A549 (cell line): ENCODE measurements at regions of chr6 and their contacts with region 1.

Region 1: GRCh38 chr6:55276745-55277530 is 50.3 kb upstream of the GFRAL start:
- DNase-seq: peak; percentile 15 to 74
- ATAC-seq: peak in 1 of 2 experiments; percentile 61; a peak in 2 of 6 replicates
- H3K4me3 ChIP-seq: no peak overlapping the region
- H3K27ac ChIP-seq: no peak overlapping the region
- H3K4me1 ChIP-seq: no peaks in the 10 kb centered on the region
- CTCF ChIP-seq: peak; percentile 63
- EP300 ChIP-seq: no peak
- POLR2A ChIP-seq: no peak
- RAD21 ChIP-seq: peak; percentile 68 to 73

Region 2: GRCh38 chr6:55141611-55142010 is 135.3 kb before region 1 on chr6:
- CTCF ChIA-PET with region 1: no interaction called
- POLR2A ChIA-PET with region 1: no interaction called
- DNase-seq: no peak
- ATAC-seq: no peak
- H3K4me3 ChIP-seq: no peak overlapping the region
- H3K27ac ChIP-seq: no peak overlapping the region
- H3K4me1 ChIP-seq: no peaks in the 10 kb centered on the region
- CTCF ChIP-seq: no peak
- EP300 ChIP-seq: no peak
- POLR2A ChIP-seq: no peak
- RAD21 ChIP-seq: no peak

Region 3: GRCh38 chr6:55445648-55446204 is 168.8 kb after region 1 on chr6:
- CTCF ChIA-PET with region 1: interaction called, 12 read pairs
- POLR2A ChIA-PET with region 1: no interaction called
- DNase-seq: peak in 1 of 2 experiments; percentile 31
- ATAC-seq: no peak
- H3K4me3 ChIP-seq: no peak overlapping the region
- H3K27ac ChIP-seq: no peak overlapping the region
- H3K4me1 ChIP-seq: 0 out of 3 replicates have a peak, but pooled peaks cover 3% of the 10 kb centered on the region
- CTCF ChIP-seq: peak; percentile 81
- EP300 ChIP-seq: no peak
- POLR2A ChIP-seq: no peak
- RAD21 ChIP-seq: peak; percentile 84 to 87

Region 4: GRCh38 chr6:55953335-55953734 is 676.4 kb after region 1 on chr6:
- CTCF ChIA-PET with region 1: interaction called, 10 read pairs
- POLR2A ChIA-PET with region 1: no interaction called
- DNase-seq: peak; percentile 10 to 51
- ATAC-seq: peak; percentile 73 to 76; a peak in 5 of 6 replicates
- H3K4me3 ChIP-seq: peak overlapping the region; percentile 41
- H3K27ac ChIP-seq: peak overlapping the region; percentile 51 to 52; a peak in 3 of 6 replicates
- H3K4me1 ChIP-seq: 0 out of 3 replicates have a peak, but pooled peaks cover 2% of the 10 kb centered on the region
- CTCF ChIP-seq: peak; percentile 66
- EP300 ChIP-seq: no peak
- POLR2A ChIP-seq: no peak
- RAD21 ChIP-seq: peak; percentile 76 to 83

Region 5: DNA sequence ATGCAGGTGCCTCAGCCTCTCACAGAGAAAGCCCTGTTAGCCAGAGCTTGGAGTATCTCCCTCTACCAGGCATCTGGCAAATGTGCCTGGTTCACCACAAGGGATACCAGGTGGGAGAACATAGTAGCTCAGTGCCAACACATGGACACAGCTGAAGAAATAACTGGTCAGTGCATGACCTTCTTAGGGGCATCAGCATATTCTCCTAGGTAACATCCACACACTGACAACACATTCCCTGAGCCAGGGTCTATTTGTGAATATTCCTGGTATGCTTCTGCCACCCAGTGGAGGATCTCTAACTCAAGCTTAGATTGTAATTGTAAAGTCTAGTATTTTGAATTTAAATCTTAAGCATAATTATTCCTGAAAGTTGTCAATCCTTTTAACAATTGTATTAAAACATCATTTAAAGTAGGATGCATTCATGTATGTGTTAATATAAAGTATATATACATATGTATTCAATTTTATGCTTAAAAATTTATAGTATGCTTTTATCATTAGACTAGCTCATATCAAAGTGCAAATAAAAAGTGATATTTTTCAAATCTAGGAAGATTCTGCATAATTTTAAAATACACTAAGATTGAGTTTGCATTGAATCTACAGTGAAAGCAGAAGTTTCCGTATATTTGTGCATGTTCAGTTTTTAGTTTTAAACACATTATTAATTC is 1015.7 kb after region 1 on chr6:
- CTCF ChIA-PET with region 1: interaction called, 11 read pairs
- POLR2A ChIA-PET with region 1: no interaction called
- DNase-seq: peak; percentile 39 to 67
- ATAC-seq: peak; percentile 84 to 89
- H3K4me3 ChIP-seq: no peak overlapping the region
- H3K27ac ChIP-seq: peak overlapping the region in 1 of 2 experiments; percentile 53; a peak in 2 of 6 replicates
- H3K4me1 ChIP-seq: peaks cover 8% of the 10 kb centered on the region
- CTCF ChIP-seq: peak; percentile 85
- EP300 ChIP-seq: no peak
- POLR2A ChIP-seq: no peak
- RAD21 ChIP-seq: peak; percentile 90 to 95